Left ventricle myocardium inferior (tissue), 1 donor: ENCODE measurements at regions of chr1 and their contacts with region 1.

Region 1: DNA sequence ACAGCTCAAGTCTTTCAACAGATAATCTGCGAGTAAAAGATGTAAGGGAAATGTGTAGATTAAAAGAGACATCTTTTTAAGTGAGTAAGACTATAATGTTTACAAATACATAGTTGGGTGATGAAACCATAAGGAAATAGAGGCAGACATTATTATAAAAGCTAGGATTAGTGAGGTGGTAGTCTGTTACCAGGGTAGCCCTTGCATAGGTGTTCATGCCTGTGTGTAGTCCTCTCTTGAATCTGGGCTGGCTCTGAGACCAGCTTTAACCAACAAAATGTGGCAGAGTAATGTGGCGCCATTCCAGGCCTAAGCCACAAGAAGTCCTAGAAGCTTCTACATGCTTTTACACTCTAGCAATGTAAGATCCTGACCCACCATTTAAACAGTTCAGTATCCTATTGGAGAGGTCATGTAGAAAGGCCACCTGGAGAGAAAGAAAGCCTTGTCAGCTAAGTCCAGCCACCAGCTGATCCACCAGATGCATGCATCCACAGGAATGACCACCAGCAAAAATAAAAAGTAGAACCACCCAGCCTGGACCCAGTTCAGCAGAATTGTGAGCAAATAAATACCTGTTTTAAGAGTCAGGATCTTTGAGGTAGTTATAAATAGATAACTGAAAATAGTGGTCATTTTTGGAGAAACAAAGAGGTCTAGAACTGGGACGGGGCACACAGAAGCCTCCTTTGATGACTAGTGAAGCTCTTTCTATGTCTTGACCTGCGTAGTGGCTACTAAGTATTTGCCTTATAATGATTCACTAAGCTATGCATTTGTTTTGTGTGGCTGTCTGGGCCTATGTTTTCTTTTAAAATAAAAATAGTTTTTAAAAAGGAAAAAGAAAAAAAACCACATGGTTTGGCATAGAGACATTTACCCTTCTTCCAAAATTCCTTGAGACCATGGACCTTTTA is 8.1 kb downstream of the NIBAN1 start:
- DNase-seq: no peak
- H3K4me3 ChIP-seq: no peak overlapping the region
- H3K27ac ChIP-seq: peak overlapping the region; percentile 62
- H3K4me1 ChIP-seq: peaks cover 71% of the 10 kb centered on the region
- H3K27me3 ChIP-seq: no peaks in the 10 kb centered on the region
- CTCF ChIP-seq: no peak

Region 2: DNA sequence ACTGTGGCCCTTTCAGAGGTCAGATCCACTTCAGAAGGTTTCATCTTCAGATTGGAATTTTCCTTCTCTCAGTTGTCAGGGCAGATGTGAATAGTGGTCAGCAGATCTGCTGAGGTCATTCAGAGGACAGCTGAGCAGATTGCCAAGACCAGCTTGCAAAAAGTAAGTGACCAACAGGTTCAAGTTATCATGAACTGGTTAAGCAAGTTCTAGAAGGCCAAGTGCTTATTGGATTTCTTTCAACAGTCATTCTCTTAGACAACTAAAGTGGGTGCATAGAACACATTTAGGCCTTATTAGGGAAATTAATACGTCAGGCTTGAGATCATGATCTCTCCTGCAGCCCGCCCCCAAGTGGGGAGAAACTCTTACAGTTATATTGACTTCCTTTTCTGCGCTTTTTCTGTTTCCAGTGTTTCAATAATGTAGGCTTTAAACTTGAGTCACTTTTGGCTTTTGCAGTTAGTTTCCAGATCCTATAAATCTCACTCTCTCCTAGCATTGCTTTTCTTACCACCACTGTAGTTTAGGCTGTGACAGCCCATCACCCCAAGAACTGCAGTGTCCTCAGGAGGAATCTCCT is 483.0 kb before region 1 on chr1:
- intact Hi-C with region 1: no loop called
- DNase-seq: no peak
- H3K4me3 ChIP-seq: no peak overlapping the region
- H3K27ac ChIP-seq: peak overlapping the region; percentile 84
- H3K4me1 ChIP-seq: peaks cover 85% of the 10 kb centered on the region
- H3K27me3 ChIP-seq: no peaks in the 10 kb centered on the region
- CTCF ChIP-seq: no peak

Region 3: DNA sequence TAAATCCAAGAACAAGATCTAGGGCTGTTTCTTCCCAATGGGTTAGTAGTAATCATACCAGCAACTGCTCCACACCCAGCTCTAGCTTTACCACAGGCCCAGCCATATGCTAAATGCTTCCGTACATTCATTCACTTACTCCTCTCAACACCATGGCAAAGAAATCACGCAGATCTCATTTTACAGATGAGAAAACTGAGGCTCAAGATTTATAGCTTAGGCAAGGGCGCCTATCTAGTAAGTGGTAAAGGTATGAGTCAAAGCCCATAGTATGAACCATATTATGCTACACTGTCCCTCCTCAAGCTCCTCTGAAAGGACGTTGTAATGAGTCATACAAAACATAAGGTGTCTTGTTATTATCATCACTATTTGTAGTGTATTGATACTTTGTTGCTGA is 74.1 kb before region 1 on chr1:
- intact Hi-C with region 1: loop called (anchors 10 kb)
- DNase-seq: no peak
- H3K4me3 ChIP-seq: no peak overlapping the region
- H3K27ac ChIP-seq: peak overlapping the region; percentile 87
- H3K4me1 ChIP-seq: peaks cover 90% of the 10 kb centered on the region
- H3K27me3 ChIP-seq: no peaks in the 10 kb centered on the region
- CTCF ChIP-seq: no peak

Region 4: GRCh38 chr1:185152187-185152767 is 186.1 kb after region 1 on chr1:
- intact Hi-C with region 1: no loop called
- DNase-seq: no peak
- H3K4me3 ChIP-seq: no peak overlapping the region
- H3K27ac ChIP-seq: no peak overlapping the region
- H3K4me1 ChIP-seq: peaks cover 46% of the 10 kb centered on the region
- H3K27me3 ChIP-seq: no peaks in the 10 kb centered on the region
- CTCF ChIP-seq: no peak